ENCODE measurements at regions of chr3 and their contacts with region 1.

Region 1: DNA sequence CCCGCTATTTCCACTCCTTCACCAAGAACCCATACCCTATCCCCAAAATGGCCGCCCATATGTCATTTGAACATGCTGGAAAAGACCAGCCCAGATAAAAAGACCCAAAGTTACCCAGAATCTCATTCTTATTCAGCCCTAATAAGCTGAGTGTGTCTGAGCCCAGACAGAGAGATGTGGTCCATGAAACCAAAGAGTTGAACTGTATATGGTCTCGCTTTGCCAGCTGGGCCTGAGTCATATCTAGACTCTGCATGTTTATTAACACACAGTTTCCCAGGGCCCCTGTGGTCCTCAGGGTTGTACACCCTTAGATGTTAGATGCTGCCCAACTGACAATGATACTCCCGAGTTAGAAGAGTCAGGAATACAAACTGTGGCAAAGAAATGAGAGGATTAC is 201.9 kb upstream of the STRIT1 start:
- DNase-seq: no peak
- ATAC-seq: peak; percentile 90
- H3K4me3 ChIP-seq: no peak overlapping the region
- H3K27ac ChIP-seq: no peak overlapping the region
- H3K4me1 ChIP-seq: peaks cover 7% of the 10 kb centered on the region
- H3K27me3 ChIP-seq: peaks cover 0 to 2% of the 10 kb centered on the region in 2 experiments; a peak in 1 of 4 replicates
- CTCF ChIP-seq: no peak
- EP300 ChIP-seq: no peak
- POLR2A ChIP-seq: no peak
- RAD21 ChIP-seq: no peak

Region 2: GRCh38 chr3:155519078-155519477 is 23.7 kb after region 1 on chr3:
- CTCF ChIA-PET with region 1: no interaction called
- POLR2A ChIA-PET with region 1: no interaction called
- RAD21 ChIA-PET with region 1: no interaction called
- SMC1A ChIA-PET with region 1: interaction called, 4 read pairs
- in situ Hi-C with region 1: no loop called
- intact Hi-C with region 1: loop called (anchors 2 kb)
- DNase-seq: no peak
- ATAC-seq: peak; percentile 89
- H3K4me3 ChIP-seq: no peak overlapping the region
- H3K27ac ChIP-seq: no peak overlapping the region
- H3K4me1 ChIP-seq: no peaks in the 10 kb centered on the region
- H3K27me3 ChIP-seq: no peaks in the 10 kb centered on the region
- CTCF ChIP-seq: no peak
- EP300 ChIP-seq: no peak
- POLR2A ChIP-seq: no peak
- RAD21 ChIP-seq: no peak

Region 3: GRCh38 chr3:155549087-155549486 is 53.7 kb after region 1 on chr3:
- CTCF ChIA-PET with region 1: no interaction called
- POLR2A ChIA-PET with region 1: no interaction called
- RAD21 ChIA-PET with region 1: no interaction called
- SMC1A ChIA-PET with region 1: interaction called, 4 read pairs
- in situ Hi-C with region 1: no loop called
- intact Hi-C with region 1: loop called (anchors 1 kb)
- DNase-seq: no peak
- ATAC-seq: peak; percentile 91
- H3K4me3 ChIP-seq: no peak overlapping the region
- H3K27ac ChIP-seq: no peak overlapping the region
- H3K4me1 ChIP-seq: no peaks in the 10 kb centered on the region
- H3K27me3 ChIP-seq: no peaks in the 10 kb centered on the region
- CTCF ChIP-seq: no peak
- EP300 ChIP-seq: peak in 1 of 2 experiments; percentile 18; a peak in 1 of 4 replicates
- POLR2A ChIP-seq: no peak
- RAD21 ChIP-seq: no peak

Region 4: GRCh38 chr3:155554777-155555451 is 59.5 kb after region 1 on chr3:
- CTCF ChIA-PET with region 1: no interaction called
- POLR2A ChIA-PET with region 1: no interaction called
- RAD21 ChIA-PET with region 1: no interaction called
- SMC1A ChIA-PET with region 1: interaction called, 4 read pairs
- in situ Hi-C with region 1: no loop called
- intact Hi-C with region 1: loop called (anchors 1 kb)
- DNase-seq: peak; percentile 39
- ATAC-seq: peak; percentile 81
- H3K4me3 ChIP-seq: no peak overlapping the region
- H3K27ac ChIP-seq: no peak overlapping the region
- H3K4me1 ChIP-seq: no peaks in the 10 kb centered on the region
- H3K27me3 ChIP-seq: no peaks in the 10 kb centered on the region; a peak in 1 of 4 replicates
- CTCF ChIP-seq: no peak
- EP300 ChIP-seq: no peak; a peak in 1 of 4 replicates
- POLR2A ChIP-seq: no peak
- RAD21 ChIP-seq: no peak